GM10248 (cell line): ENCODE measurements at regions of chr5 and their contacts with region 1.

Region 1: GRCh38 chr5:132086277-132086794 is 12.7 kb downstream of the CSF2 start:
- DNase-seq: no peak
- CTCF ChIP-seq: no peak

Region 2: DNA sequence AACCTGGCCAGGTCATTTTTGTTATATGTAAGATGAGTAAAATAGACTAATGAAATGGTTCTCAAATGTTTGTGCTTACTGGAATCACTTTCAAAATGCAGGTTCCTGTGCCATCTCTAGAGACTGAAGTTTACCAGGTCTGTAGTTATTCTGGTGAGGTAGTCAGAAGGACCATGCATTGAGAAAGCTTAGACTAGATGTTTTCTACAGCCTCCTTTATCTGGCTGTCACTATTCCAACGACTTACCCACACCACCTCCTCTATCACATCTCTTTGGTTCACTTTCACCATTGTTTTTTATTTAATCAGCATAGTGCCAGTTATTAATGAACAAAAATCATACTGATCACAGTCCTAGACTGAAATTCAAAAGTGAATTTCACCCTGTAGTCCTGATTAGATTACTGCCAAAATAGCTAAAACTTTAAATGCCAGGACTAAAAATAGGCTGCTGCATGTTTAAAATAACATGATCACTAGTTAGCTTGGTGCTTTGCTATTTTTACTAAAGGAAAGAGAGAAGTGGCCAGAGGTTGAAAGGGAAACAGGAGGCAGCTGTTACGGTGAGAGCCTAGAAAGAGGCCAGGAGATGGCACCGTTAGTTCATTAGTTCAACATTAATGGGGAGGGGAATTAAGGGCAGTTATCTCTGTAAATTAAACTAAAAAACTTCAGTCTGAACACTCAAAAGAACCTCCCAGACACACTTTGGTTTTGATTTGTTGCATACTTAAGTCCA is 275.7 kb before region 1 on chr5:
- CTCF ChIA-PET with region 1: no interaction called
- POLR2A ChIA-PET with region 1: no interaction called
- DNase-seq: peak; percentile 52
- CTCF ChIP-seq: peak; percentile 58

Region 3: GRCh38 chr5:132103332-132103951 is 17.1 kb after region 1 on chr5:
- CTCF ChIA-PET with region 1: interaction called, 11 read pairs
- POLR2A ChIA-PET with region 1: no interaction called
- DNase-seq: peak; percentile 77
- CTCF ChIP-seq: peak; percentile 0